ENCODE measurements at regions of chr13 and their contacts with region 1.

Region 1: DNA sequence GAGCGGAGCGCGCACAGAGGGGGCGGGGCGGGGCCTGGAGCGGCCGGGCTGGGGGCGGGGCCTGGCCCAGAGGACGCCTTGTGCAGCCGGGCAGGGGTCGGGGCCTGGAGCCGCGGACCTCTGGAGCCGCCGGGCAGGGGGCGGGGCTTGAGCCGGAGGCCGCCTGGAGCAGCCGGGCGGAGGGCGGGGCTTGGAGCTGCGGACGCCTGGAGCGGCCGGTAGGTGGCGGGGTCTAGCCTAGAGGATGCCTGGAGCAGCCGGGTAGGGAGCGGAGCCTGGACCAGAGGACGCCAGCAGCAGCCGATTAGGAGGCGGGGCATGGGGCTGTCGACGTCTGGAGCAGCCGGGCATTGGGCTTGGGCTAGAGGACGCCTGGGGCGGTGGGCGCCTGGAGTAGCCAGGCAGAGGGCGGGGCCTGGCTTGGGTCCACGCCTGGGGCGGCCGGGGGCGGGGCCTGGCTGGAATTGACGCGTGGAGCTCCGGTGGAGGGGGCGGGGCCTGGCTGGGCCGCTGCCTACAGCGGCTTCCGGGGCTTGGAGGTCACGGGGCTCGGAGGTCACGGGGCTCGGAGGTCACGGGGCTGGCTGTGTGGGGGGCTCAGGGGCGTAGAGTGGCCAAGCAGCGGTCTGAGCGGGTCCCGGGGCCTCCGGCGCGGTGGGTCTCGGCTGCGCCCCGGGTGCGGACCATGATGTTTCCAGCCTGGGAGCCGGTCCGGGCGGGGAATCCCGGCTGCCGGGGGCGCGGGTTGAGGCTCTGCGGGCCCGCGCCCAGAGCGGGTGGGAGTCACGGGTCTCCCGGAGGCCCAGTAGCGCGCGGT is at the start of gene ANKRD10:
- DNase-seq: peak; percentile 82
- ATAC-seq: peak; percentile 84
- H3K4me3 ChIP-seq: peak within 1 kb of the TSS; percentile 93
- H3K27ac ChIP-seq: peak within 1 kb of the TSS; percentile 91
- H3K4me1 ChIP-seq: peaks cover 23% of the 10 kb centered on the region
- H3K27me3 ChIP-seq: no peaks in the 10 kb centered on the region
- CTCF ChIP-seq: peak; percentile 67 to 86 (median 84)
- EP300 ChIP-seq: no peak
- POLR2A ChIP-seq: peak; percentile 80
- RAD21 ChIP-seq: peak; percentile 65
- polyA plus RNA-seq, gene ANKRD10: 47.1 to 62.3 TPM

Region 2: DNA sequence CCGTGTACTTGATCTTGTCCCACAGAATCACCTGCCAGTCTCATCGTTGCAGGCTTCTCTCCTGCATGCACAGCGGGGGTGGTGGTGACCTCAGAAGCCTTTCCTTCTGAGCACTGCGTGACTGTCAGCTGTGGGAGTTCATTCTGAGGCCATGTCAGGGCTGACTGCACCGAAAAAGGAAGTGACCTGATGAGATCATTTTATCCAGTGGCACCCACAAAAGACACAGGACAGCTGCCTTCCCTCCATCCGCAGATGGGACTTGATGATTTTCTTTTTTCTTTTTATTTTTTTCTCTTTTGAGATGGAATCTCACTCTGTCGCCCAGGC is 443.5 kb before region 1 on chr13:
- CTCF ChIA-PET with region 1: no interaction called
- POLR2A ChIA-PET with region 1: no interaction called
- RAD21 ChIA-PET with region 1: no interaction called
- SMC1A ChIA-PET with region 1: no interaction called
- in situ Hi-C with region 1: no loop called
- intact Hi-C with region 1: loop called (anchors 10 kb)
- DNase-seq: peak; percentile 87
- ATAC-seq: peak; percentile 96
- H3K4me3 ChIP-seq: peak overlapping the region; percentile 42; the same call in 1 of the 2 replicates
- H3K27ac ChIP-seq: peak overlapping the region; percentile 60
- H3K4me1 ChIP-seq: peaks cover 37% of the 10 kb centered on the region
- H3K27me3 ChIP-seq: no peaks in the 10 kb centered on the region
- CTCF ChIP-seq: no peak
- EP300 ChIP-seq: peak; percentile 100
- POLR2A ChIP-seq: peak; percentile 68
- RAD21 ChIP-seq: peak; percentile 3; the same call in 1 of the 2 replicates

Region 3: GRCh38 chr13:110874508-110874960 is 40.7 kb before region 1 on chr13:
- CTCF ChIA-PET with region 1: no interaction called
- POLR2A ChIA-PET with region 1: no interaction called
- RAD21 ChIA-PET with region 1: no interaction called
- SMC1A ChIA-PET with region 1: no interaction called
- in situ Hi-C with region 1: no loop called
- intact Hi-C with region 1: no loop called
- DNase-seq: no peak
- ATAC-seq: peak; percentile 93
- H3K4me3 ChIP-seq: peak overlapping the region; percentile 42; the same call in 1 of the 2 replicates
- H3K27ac ChIP-seq: no peak overlapping the region
- H3K4me1 ChIP-seq: no peaks in the 10 kb centered on the region
- H3K27me3 ChIP-seq: no peaks in the 10 kb centered on the region
- CTCF ChIP-seq: no peak
- EP300 ChIP-seq: no peak
- POLR2A ChIP-seq: no peak
- RAD21 ChIP-seq: no peak

Region 4: DNA sequence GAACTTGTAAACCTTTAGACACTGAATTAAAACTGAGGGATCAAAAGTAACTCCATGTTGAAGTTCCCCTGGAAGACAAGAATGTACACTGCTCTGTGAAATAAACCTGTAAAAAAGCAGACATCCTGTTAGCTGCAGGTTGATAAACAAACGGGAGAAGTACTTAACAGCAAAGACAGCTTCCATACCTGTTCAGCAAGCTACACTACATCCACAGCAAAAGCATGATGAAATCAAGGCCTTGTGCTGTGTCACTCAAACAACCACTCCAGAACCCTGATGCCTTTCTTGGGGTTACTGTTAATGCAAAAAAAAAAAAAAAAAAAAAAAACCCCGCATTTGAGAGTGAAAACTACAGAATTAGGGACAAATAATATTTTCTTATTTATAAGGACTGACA is 21.2 kb before region 1 on chr13:
- CTCF ChIA-PET with region 1: interaction called, 3 read pairs
- POLR2A ChIA-PET with region 1: interaction called, 13 read pairs
- RAD21 ChIA-PET with region 1: no interaction called
- SMC1A ChIA-PET with region 1: interaction called, 3 read pairs
- in situ Hi-C with region 1: no loop called
- intact Hi-C with region 1: no loop called
- DNase-seq: no peak
- ATAC-seq: no peak
- H3K4me3 ChIP-seq: no peak overlapping the region
- H3K27ac ChIP-seq: no peak overlapping the region
- H3K4me1 ChIP-seq: no peaks in the 10 kb centered on the region
- H3K27me3 ChIP-seq: no peaks in the 10 kb centered on the region
- CTCF ChIP-seq: no peak
- EP300 ChIP-seq: no peak
- POLR2A ChIP-seq: no peak
- RAD21 ChIP-seq: no peak

Region 5: DNA sequence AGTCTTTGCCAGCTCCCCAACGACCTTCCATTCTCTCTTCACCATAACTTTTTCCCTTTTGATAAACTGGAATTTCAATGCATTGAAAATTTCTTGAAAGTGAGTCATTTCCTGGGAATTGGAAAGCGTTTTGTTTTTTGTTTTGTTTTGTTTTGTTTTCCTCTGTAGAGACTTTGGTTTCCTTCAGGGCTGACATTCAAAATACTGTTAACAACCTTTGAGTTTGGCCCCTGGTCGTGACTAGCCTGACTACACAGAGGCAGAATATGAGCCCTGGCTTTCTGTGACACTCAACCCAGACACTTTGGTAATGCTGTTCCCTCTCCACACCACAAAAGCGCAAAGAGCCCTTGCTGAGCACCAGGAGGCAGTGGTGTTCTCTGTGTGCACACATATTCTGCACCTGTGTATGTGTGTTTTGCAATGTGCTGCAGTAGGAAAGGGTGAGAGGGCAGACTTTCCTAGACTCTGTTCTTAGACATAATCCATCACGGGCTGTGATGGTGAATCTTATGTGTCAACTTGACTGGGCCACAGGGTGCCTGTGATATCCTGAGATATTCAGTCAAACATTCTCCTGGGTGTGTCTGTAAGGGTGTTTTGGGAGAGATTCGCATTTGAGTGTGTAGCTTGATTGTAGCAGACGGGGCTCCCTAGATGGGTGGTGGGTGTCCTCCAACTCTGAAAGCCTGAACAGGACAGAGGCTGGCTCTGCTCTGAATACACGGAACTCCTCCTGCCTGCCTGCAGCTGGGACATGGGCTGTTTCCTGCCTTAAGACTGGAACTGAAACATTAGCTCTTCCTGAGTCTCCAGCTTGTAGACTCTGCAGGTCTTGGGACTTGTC is 29.1 kb after region 1 on chr13:
- CTCF ChIA-PET with region 1: interaction called, 8 read pairs
- POLR2A ChIA-PET with region 1: interaction called, 4 read pairs
- RAD21 ChIA-PET with region 1: interaction called, 16 read pairs
- SMC1A ChIA-PET with region 1: interaction called, 5 read pairs
- in situ Hi-C with region 1: no loop called
- intact Hi-C with region 1: loop called (anchors 2 kb)
- DNase-seq: no peak
- ATAC-seq: peak; percentile 86
- H3K4me3 ChIP-seq: no peak overlapping the region
- H3K27ac ChIP-seq: no peak overlapping the region
- H3K4me1 ChIP-seq: peaks cover 8% of the 10 kb centered on the region; the same call in 1 of the 2 replicates
- H3K27me3 ChIP-seq: no peaks in the 10 kb centered on the region
- CTCF ChIP-seq: peak; percentile 48 to 66 (median 63); a peak in 5 of 6 replicates
- EP300 ChIP-seq: no peak
- POLR2A ChIP-seq: no peak
- RAD21 ChIP-seq: peak; percentile 92

Region 6: GRCh38 chr13:111046590-111047141 is 131.4 kb after region 1 on chr13:
- CTCF ChIA-PET with region 1: interaction called, 8 read pairs
- POLR2A ChIA-PET with region 1: interaction called, 9 read pairs
- RAD21 ChIA-PET with region 1: interaction called, 17 read pairs
- SMC1A ChIA-PET with region 1: interaction called, 6 read pairs
- in situ Hi-C with region 1: loop called (anchors 5 kb)
- intact Hi-C with region 1: loop called (anchors 1 kb)
- DNase-seq: peak; percentile 36
- ATAC-seq: peak; percentile 85
- H3K4me3 ChIP-seq: no peak overlapping the region
- H3K27ac ChIP-seq: no peak overlapping the region
- H3K4me1 ChIP-seq: peaks cover 12% of the 10 kb centered on the region
- H3K27me3 ChIP-seq: no peaks in the 10 kb centered on the region
- CTCF ChIP-seq: peak; percentile 27 to 50 (median 42); a peak in 5 of 6 replicates
- EP300 ChIP-seq: no peak; a peak in 1 of 4 replicates
- POLR2A ChIP-seq: no peak
- RAD21 ChIP-seq: peak; percentile 47

Region 7: GRCh38 chr13:112704308-112705145 is 1789.3 kb after region 1 on chr13:
- CTCF ChIA-PET with region 1: no interaction called
- POLR2A ChIA-PET with region 1: no interaction called
- RAD21 ChIA-PET with region 1: no interaction called
- SMC1A ChIA-PET with region 1: no interaction called
- in situ Hi-C with region 1: no loop called
- intact Hi-C with region 1: no loop called
- DNase-seq: no peak
- ATAC-seq: no peak
- H3K4me3 ChIP-seq: no peak overlapping the region
- H3K27ac ChIP-seq: no peak overlapping the region
- H3K4me1 ChIP-seq: no peaks in the 10 kb centered on the region
- H3K27me3 ChIP-seq: no peaks in the 10 kb centered on the region
- CTCF ChIP-seq: no peak
- EP300 ChIP-seq: no peak
- POLR2A ChIP-seq: no peak
- RAD21 ChIP-seq: no peak

Measured in GM12878 (cell line).